Activated B cell treated with CpG ODN at 0.5 μM for 24 hours (primary cell): ENCODE measurements at regions of chr6 and their contacts with region 1.

Region 1: GRCh38 chr6:107847844-107848802 is 24.0 kb upstream of the SCML4 start:
- DNase-seq: peak; percentile 82
- ATAC-seq: peak; percentile 89
- H3K4me3 Mint-ChIP-seq: peak overlapping the region; percentile 81
- H3K27ac Mint-ChIP-seq: no peak overlapping the region
- H3K4me1 Mint-ChIP-seq: peaks cover 16% of the 10 kb centered on the region
- H3K27me3 Mint-ChIP-seq: peaks cover 4% of the 10 kb centered on the region
- CTCF ChIP-seq: peak; percentile 99

Region 2: DNA sequence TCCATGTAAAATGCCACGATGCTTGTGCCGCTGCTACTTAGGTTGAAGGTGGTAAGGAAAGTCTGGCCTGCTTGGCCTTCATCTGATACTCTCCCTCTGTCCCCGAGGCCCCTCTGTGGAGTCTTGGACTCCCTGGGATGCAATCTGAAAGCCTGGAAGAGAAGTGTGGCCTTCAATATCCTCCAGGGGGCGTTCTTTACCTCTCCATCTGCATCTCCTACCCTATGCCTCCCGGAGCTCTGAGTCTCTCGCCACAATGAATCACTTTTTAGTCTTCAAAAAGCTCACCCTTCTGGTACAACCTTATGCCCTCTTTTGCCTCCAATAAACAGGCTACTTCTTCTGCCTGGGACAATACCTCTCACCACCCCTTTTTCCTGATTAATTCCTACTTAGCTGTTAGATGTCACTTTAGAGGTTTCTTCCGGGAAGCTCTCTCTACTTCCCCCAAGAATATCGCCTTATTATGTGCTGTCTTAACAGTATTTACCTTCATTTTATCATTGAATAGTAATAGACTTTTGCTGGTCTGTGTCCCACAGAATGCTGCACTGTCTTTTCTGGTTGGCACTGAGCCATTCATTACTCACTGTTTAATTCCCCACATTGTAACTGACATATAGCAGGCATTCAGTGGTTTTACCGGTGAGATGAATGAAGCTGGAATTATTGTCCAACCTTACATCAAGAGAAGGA is 1508.6 kb before region 1 on chr6:
- CTCF ChIA-PET with region 1: interaction called, 5 read pairs
- POLR2A ChIA-PET with region 1: no interaction called
- intact Hi-C with region 1: loop called (anchors 1 kb)
- DNase-seq: no peak
- ATAC-seq: peak; percentile 79
- H3K4me3 Mint-ChIP-seq: peak overlapping the region; percentile 59
- H3K27ac Mint-ChIP-seq: no peak overlapping the region
- H3K4me1 Mint-ChIP-seq: peaks cover 7% of the 10 kb centered on the region
- H3K27me3 Mint-ChIP-seq: peaks cover 17% of the 10 kb centered on the region
- CTCF ChIP-seq: no peak

Region 3: DNA sequence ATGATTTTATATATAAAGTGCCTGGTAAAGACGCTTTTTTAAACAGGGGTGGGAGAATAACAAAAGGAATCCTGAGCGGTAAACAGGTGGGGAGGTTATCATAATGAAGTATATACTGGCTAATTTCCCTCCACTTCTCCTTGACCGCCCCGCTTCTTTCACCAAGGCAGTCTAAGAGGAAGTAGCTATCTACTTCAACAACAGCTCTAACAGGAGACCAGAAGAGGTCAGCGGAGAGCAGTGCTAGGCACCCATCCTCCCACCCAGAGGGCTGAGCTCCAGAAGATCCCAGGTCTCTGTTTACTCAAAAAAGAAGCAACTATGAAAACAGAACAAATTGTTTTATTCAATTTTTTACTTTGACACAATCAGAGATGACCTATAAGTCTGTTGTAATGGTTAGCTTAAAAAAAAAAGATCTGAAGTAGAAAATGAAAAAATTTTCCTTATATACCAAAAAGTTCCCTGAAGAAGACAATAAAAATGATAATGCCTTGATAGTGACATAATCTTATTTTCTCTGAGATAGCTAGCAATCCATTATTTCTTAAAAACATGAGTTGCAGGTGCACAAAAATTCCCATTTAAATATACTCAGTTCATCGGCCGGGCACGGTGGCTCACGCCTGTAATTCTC is 529.9 kb before region 1 on chr6:
- CTCF ChIA-PET with region 1: interaction called, 16 read pairs
- POLR2A ChIA-PET with region 1: no interaction called
- intact Hi-C with region 1: no loop called
- DNase-seq: no peak
- ATAC-seq: peak; percentile 85
- H3K4me3 Mint-ChIP-seq: no peak overlapping the region
- H3K27ac Mint-ChIP-seq: no peak overlapping the region
- H3K4me1 Mint-ChIP-seq: peaks cover 15% of the 10 kb centered on the region
- H3K27me3 Mint-ChIP-seq: no peaks in the 10 kb centered on the region
- CTCF ChIP-seq: no peak

Region 4: DNA sequence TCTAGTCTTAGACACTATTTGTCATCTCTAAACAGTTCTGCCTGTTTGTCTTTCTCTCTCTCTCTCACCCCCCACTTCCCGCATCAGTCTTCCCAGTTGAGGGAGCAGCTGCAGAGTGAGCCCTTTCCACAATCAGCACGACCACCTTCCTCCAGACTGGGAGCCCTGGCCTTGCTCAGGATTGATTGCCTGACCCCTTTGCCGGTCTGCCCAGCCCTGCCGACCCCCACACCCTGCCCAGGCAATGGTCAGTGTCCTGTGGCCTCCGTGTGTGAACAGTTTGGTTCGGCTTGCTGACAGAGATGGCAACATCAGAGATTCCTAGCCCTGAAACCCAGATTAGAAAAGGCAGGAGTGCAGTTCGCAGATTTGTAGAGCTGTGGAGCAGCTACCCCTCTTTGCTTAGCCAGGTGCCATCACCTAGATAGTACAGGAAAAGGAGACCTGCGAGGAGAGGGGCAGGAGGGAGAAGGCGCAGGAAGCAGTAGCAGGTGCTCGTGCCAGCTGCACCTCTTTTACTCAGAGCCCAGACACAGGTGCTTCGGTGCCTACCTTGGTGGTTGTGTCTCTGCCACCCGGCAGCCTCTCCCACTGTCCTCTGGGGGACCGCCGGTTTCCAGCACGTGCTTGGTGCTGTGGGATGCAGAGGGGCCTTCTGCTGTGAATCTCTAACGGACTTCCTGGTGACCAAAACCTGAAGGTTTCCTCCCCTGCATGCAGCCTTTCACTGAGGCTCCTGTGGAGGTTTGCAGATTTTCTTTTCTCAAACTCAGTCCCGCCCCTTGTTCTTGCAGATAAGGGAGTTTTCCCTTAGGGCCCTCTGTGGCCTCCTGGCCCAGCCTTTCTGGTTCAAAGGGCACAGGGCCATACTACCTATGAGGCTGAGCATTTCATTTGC is 116.5 kb before region 1 on chr6:
- CTCF ChIA-PET with region 1: interaction called, 8 read pairs
- POLR2A ChIA-PET with region 1: no interaction called
- intact Hi-C with region 1: loop called (anchors 2 kb)
- DNase-seq: no peak
- ATAC-seq: peak; percentile 56
- H3K4me3 Mint-ChIP-seq: peak overlapping the region; percentile 62
- H3K27ac Mint-ChIP-seq: peak overlapping the region; percentile 41
- H3K4me1 Mint-ChIP-seq: peaks cover 44% of the 10 kb centered on the region
- H3K27me3 Mint-ChIP-seq: no peaks in the 10 kb centered on the region
- CTCF ChIP-seq: no peak

Region 5: DNA sequence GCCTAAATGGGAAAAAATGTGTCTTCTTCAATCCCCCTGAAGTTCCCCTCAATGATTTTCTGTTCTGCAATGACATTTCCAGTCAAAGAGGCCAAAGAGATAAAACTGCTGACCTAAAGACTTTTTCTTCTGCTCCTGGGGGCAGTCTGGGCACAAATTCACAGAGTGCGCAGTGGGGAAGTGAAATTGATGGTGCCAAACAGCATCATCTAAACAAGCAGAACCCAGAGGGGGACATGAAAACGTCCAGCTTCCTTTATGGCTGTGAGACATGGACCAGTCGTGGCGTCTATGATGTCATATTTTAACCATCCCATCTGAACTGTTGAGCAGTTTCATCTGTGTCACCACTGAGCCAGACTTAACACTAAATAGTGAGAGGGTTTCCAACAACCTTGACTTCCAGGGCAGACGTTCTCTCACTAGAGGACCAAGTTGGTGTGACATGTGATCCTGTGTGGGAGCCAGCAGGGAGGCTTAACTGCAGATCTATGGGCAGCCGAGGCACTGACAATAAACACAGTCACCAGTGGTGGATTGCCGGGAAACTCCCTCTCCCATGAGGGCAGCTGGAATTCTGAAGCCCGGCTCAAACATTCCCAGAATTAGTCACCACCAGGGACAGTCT is 36.4 kb before region 1 on chr6:
- CTCF ChIA-PET with region 1: interaction called, 5 read pairs
- POLR2A ChIA-PET with region 1: no interaction called
- intact Hi-C with region 1: loop called (anchors 5 kb)
- DNase-seq: no peak
- ATAC-seq: peak; percentile 50
- H3K4me3 Mint-ChIP-seq: peak overlapping the region; percentile 9
- H3K27ac Mint-ChIP-seq: peak overlapping the region; percentile 32
- H3K4me1 Mint-ChIP-seq: peaks cover 10% of the 10 kb centered on the region
- H3K27me3 Mint-ChIP-seq: no peaks in the 10 kb centered on the region
- CTCF ChIP-seq: no peak

Region 6: DNA sequence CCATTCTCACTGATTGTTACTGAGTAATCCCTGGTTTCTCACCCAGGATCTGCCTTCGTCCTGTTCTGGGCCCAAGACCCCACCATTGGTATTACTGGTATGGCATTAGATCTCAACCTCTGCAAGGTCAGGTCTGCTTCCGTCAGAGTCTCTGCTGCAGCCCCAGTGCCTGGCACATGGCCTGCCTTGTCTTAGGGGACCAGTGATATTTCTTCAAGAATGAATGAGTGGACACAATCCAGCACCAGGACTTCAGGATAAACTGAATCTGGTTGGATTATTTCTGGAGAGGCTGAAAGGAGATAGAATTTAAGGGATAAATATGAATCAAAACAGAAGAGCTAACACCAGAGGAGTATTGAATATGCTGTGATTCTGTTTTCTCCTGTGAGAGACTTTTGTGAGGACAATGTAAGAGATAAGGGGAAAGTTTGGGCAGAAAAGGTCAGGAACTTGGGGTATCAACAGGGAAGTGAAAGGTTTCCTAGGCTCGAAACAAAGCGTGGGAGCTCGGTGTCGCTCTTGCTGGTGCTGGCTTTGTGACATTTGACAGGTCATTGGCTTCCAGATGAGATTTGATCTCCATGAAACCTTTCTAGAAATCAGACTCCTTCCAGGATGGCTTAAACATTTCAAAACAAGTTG is 172.5 kb after region 1 on chr6:
- CTCF ChIA-PET with region 1: no interaction called
- POLR2A ChIA-PET with region 1: no interaction called
- intact Hi-C with region 1: no loop called
- DNase-seq: no peak
- ATAC-seq: no peak
- H3K4me3 Mint-ChIP-seq: no peak overlapping the region
- H3K27ac Mint-ChIP-seq: no peak overlapping the region
- H3K4me1 Mint-ChIP-seq: no peaks in the 10 kb centered on the region
- H3K27me3 Mint-ChIP-seq: no peaks in the 10 kb centered on the region
- CTCF ChIP-seq: no peak

Region 7: GRCh38 chr6:108052706-108053105 is 204.6 kb after region 1 on chr6:
- CTCF ChIA-PET with region 1: interaction called, 6 read pairs
- POLR2A ChIA-PET with region 1: no interaction called
- intact Hi-C with region 1: loop called (anchors 2 kb)
- DNase-seq: no peak
- ATAC-seq: no peak
- H3K4me3 Mint-ChIP-seq: no peak overlapping the region
- H3K27ac Mint-ChIP-seq: no peak overlapping the region
- H3K4me1 Mint-ChIP-seq: no peaks in the 10 kb centered on the region
- H3K27me3 Mint-ChIP-seq: no peaks in the 10 kb centered on the region
- CTCF ChIP-seq: no peak